H1 (cell line): ENCODE measurements at regions of chr16 and their contacts with region 1.

Region 1: DNA sequence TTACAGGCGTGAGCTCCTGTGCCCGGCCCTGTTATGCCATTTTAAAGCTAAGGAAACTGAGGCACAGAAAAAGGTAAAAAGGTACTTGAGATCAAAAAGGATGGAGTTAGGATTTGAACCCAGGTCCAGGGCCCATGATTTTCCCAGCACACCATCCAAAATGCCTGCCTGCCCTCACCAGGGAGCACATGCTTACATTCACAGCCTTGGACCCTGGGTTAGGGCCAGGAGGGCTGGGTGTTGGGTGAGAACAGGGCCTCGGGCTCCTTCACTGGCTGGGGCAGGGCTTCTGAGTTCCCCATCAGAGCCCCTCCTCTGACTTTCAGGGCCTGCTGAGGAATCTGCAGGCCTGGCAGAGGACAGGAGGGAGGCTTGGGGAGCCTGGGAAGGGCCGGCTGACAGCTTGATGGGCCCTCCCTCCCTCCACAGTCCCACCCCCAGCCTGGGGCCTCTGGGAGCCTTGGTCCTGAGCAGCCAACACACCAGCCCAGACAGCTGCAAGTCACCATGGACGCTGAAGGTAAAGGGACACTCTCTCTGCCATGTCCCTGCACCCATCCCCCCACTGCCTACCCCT is at the start of gene QPRT:
- DNase-seq: peak; percentile 81 to 84
- H3K4me3 ChIP-seq: peak within 1 kb of the TSS; percentile 38 to 68 (median 58)
- H3K27ac ChIP-seq: peak within 1 kb of the TSS; percentile 91
- H3K4me1 ChIP-seq: peaks cover 2 to 14% (median 9%) of the 10 kb centered on the region in 4 experiments
- H3K27me3 ChIP-seq: no peaks in the 10 kb centered on the region
- CTCF ChIP-seq: peak in 1 of 3 experiments; percentile 9; a peak in 1 of 4 replicates
- EP300 ChIP-seq: peak in 1 of 2 experiments; percentile 57; a peak in 1 of 3 replicates
- POLR2A ChIP-seq: peak; percentile 64 to 66; a peak in 2 of 3 replicates
- RAD21 ChIP-seq: no peak
- total RNA-seq, gene QPRT: 102 and 106 TPM in 2 replicates

Region 2: DNA sequence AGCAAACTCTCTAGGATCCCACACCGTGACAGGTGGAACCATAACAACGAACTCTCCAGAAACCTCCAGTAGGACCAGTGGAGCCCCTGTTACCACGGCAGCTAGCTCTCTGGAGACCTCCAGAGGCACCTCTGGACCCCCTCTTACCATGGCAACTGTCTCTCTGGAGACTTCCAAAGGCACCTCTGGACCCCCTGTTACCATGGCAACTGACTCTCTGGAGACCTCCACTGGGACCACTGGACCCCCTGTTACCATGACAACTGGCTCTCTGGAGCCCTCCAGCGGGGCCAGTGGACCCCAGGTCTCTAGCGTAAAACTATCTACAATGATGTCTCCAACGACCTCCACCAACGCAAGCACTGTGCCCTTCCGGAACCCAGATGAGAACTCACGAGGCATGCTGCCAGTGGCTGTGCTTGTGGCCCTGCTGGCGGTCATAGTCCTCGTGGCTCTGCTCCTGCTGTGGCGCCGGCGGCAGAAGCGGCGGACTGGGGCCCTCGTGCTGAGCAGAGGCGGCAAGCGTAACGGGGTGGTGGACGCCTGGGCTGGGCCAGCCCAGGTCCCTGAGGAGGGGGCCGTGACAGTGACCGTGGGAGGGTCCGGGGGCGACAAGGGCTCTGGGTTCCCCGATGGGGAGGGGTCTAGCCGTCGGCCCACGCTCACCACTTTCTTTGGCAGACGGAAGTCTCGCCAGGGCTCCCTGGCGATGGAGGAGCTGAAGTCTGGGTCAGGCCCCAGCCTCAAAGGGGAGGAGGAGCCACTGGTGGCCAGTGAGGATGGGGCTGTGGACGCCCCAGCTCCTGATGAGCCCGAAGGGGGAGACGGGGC is 14.5 kb before region 1 on chr16:
- CTCF ChIA-PET with region 1: interaction called, 5 read pairs
- POLR2A ChIA-PET with region 1: interaction called, 59 read pairs
- DNase-seq: no peak
- H3K4me3 ChIP-seq: no peak overlapping the region
- H3K27ac ChIP-seq: no peak overlapping the region
- H3K4me1 ChIP-seq: peaks cover 0 to 24% (median 18%) of the 10 kb centered on the region in 4 experiments; a peak in 6 of 7 replicates
- H3K27me3 ChIP-seq: no peaks in the 10 kb centered on the region; a peak in 1 of 7 replicates
- CTCF ChIP-seq: no peak
- EP300 ChIP-seq: no peak
- POLR2A ChIP-seq: no peak
- RAD21 ChIP-seq: no peak

Region 3: GRCh38 chr16:29694384-29695195 is 15.8 kb after region 1 on chr16:
- CTCF ChIA-PET with region 1: interaction called, 33 read pairs
- POLR2A ChIA-PET with region 1: interaction called, 130 read pairs
- DNase-seq: no peak
- H3K4me3 ChIP-seq: no peak overlapping the region
- H3K27ac ChIP-seq: no peak overlapping the region
- H3K4me1 ChIP-seq: peaks cover 0 to 11% (median 5%) of the 10 kb centered on the region in 4 experiments; a peak in 5 of 7 replicates
- H3K27me3 ChIP-seq: no peaks in the 10 kb centered on the region
- CTCF ChIP-seq: no peak
- EP300 ChIP-seq: no peak
- POLR2A ChIP-seq: no peak
- RAD21 ChIP-seq: no peak

Region 4: GRCh38 chr16:29720699-29721098 is 41.9 kb after region 1 on chr16:
- CTCF ChIA-PET with region 1: no interaction called
- POLR2A ChIA-PET with region 1: interaction called, 12 read pairs
- DNase-seq: no peak
- H3K4me3 ChIP-seq: no peak overlapping the region
- H3K27ac ChIP-seq: no peak overlapping the region
- H3K4me1 ChIP-seq: peaks cover 0 to 10% (median 4%) of the 10 kb centered on the region in 4 experiments; a peak in 5 of 7 replicates
- H3K27me3 ChIP-seq: no peaks in the 10 kb centered on the region
- CTCF ChIP-seq: no peak
- EP300 ChIP-seq: no peak
- POLR2A ChIP-seq: no peak
- RAD21 ChIP-seq: no peak

Region 5: GRCh38 chr16:29831490-29831889 is 152.7 kb after region 1 on chr16:
- CTCF ChIA-PET with region 1: no interaction called
- POLR2A ChIA-PET with region 1: no interaction called
- DNase-seq: no peak
- H3K4me3 ChIP-seq: no peak overlapping the region
- H3K27ac ChIP-seq: no peak overlapping the region
- H3K4me1 ChIP-seq: peaks cover 0 to 2% (median 0%) of the 10 kb centered on the region in 4 experiments; a peak in 1 of 7 replicates
- H3K27me3 ChIP-seq: 0 out of 7 replicates have a peak, but pooled peaks cover 0 to 3% (median 0%) of the 10 kb centered on the region in 4 experiments
- CTCF ChIP-seq: no peak
- EP300 ChIP-seq: no peak
- POLR2A ChIP-seq: no peak
- RAD21 ChIP-seq: no peak

Region 6: DNA sequence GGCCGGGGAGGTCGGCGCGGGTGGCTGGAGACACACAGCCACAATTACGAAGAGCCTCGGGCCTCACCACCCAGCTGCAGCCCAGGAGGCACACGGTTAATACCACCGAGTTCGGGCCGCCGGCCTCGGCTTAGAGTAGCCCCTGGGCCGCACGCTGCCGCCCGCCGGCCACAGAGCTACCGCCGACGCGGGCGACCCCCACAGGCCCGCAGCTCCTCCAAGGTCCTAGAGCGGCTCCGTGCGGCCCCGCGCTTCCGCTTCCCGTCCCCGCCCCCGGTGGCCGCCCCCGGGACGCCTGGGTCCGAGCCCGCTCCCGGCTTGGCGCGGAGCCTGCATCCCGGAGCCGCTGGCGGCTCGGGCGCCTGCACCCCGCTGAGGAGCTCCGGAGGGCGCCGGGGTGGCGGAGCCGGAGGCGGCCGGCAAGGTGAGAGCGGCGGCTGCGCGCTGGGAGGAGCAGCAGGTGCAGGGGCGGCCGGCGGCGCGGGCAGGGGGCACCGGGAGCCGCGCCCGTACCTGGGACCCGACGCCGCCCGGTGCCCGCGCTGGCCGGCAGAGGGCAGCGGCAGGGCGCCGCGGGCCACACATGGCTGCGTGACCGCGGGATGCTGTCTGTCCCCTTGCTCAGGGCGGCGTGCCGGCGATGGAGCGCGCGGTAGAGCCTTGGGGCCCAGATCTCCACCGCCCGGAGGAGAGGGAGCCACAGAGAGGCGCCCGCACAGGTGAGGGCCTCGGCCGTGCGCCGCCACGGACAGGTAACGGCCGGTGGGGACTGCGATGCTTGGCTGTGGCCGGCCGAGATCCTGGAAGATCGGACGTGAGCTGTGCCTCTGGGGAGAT is 716.6 kb after region 1 on chr16 and contains the start of gene ZNF48:
- CTCF ChIA-PET with region 1: no interaction called
- POLR2A ChIA-PET with region 1: no interaction called
- DNase-seq: peak in 1 of 2 experiments; percentile 89
- H3K4me3 ChIP-seq: peak within 1 kb of the TSS; percentile 72 to 98 (median 92)
- H3K27ac ChIP-seq: peak within 1 kb of the TSS; percentile 88
- H3K4me1 ChIP-seq: peaks cover 0 to 15% (median 9%) of the 10 kb centered on the region in 4 experiments; a peak in 6 of 7 replicates
- H3K27me3 ChIP-seq: no peaks in the 10 kb centered on the region
- CTCF ChIP-seq: peak; percentile 43 to 69 (median 49)
- EP300 ChIP-seq: no peak
- POLR2A ChIP-seq: peak in 1 of 2 experiments; percentile 73; a peak in 2 of 3 replicates
- RAD21 ChIP-seq: peak; percentile 10 to 45; a peak in 2 of 4 replicates
- total RNA-seq, gene ZNF48: 40.6 and 41.2 TPM in 2 replicates